Activated CD8-positive, alpha-beta T cell treated with anti-CD3 and anti-CD28 coated beads for 36 hours (primary cell): ENCODE measurements at regions of chr1 and their contacts with region 1.

Region 1: GRCh38 chr1:117534995-117535467 is 70.8 kb upstream of the TENT5C start:
- DNase-seq: peak; percentile 40
- ATAC-seq: peak; percentile 78
- H3K4me3 Mint-ChIP-seq: no peak overlapping the region
- H3K27ac Mint-ChIP-seq: no peak overlapping the region
- H3K4me1 Mint-ChIP-seq: peaks cover 25% of the 10 kb centered on the region
- H3K27me3 Mint-ChIP-seq: no peaks in the 10 kb centered on the region
- CTCF ChIP-seq: peak; percentile 65

Region 2: DNA sequence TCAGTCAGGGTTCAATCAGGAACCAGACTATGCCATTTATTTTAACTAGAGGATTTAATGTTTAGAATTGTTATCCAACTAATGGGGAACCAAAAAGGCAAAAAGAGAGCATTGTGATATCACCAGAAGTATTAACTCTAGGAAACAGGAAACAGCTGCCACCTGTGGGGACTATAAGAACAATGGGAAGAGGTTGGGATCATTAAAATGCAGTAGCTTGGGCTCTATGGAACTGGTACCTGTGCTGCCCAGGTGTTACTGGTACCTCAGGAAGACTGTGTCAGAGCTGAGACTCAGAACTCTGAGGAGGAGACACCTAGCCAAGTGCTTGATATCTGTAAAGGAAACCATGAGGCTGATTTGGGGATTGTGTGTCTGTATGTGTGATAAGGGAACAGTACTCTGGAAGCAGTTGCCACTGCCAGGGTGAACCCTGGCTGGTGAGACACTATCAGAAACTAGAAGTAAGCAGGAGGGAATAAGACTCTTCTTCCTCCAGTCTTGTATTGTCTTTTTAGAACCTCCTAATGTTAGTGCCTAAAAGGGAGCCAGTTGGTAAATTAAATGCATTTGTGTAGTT is 118.4 kb before region 1 on chr1:
- CTCF ChIA-PET with region 1: no interaction called
- POLR2A ChIA-PET with region 1: no interaction called
- intact Hi-C with region 1: no loop called
- DNase-seq: no peak
- ATAC-seq: no peak
- H3K4me3 Mint-ChIP-seq: no peak overlapping the region
- H3K27ac Mint-ChIP-seq: no peak overlapping the region
- H3K4me1 Mint-ChIP-seq: peaks cover 33% of the 10 kb centered on the region
- H3K27me3 Mint-ChIP-seq: no peaks in the 10 kb centered on the region
- CTCF ChIP-seq: no peak

Region 3: GRCh38 chr1:117501281-117501680 is 33.8 kb before region 1 on chr1:
- CTCF ChIA-PET with region 1: interaction called, 10 read pairs
- POLR2A ChIA-PET with region 1: no interaction called
- intact Hi-C with region 1: no loop called
- DNase-seq: no peak
- ATAC-seq: no peak
- H3K4me3 Mint-ChIP-seq: no peak overlapping the region
- H3K27ac Mint-ChIP-seq: no peak overlapping the region
- H3K4me1 Mint-ChIP-seq: no peaks in the 10 kb centered on the region
- H3K27me3 Mint-ChIP-seq: no peaks in the 10 kb centered on the region
- CTCF ChIP-seq: no peak

Region 4: GRCh38 chr1:117567435-117567834 is 32.4 kb after region 1 on chr1:
- CTCF ChIA-PET with region 1: interaction called, 12 read pairs
- POLR2A ChIA-PET with region 1: interaction called, 4 read pairs
- intact Hi-C with region 1: no loop called
- DNase-seq: no peak
- ATAC-seq: no peak
- H3K4me3 Mint-ChIP-seq: no peak overlapping the region
- H3K27ac Mint-ChIP-seq: no peak overlapping the region
- H3K4me1 Mint-ChIP-seq: peaks cover 7% of the 10 kb centered on the region
- H3K27me3 Mint-ChIP-seq: no peaks in the 10 kb centered on the region
- CTCF ChIP-seq: no peak

Region 5: GRCh38 chr1:117605774-117606648 is 71.0 kb after region 1 on chr1 and contains the start of gene TENT5C:
- CTCF ChIA-PET with region 1: interaction called, 30 read pairs
- POLR2A ChIA-PET with region 1: interaction called, 3 read pairs
- intact Hi-C with region 1: loop called (anchors 10 kb)
- DNase-seq: peak; percentile 98
- ATAC-seq: peak; percentile 96
- H3K4me3 Mint-ChIP-seq: peak within 1 kb of the TSS; percentile 84
- H3K27ac Mint-ChIP-seq: peak within 1 kb of the TSS; percentile 91
- H3K4me1 Mint-ChIP-seq: peaks cover 32% of the 10 kb centered on the region
- H3K27me3 Mint-ChIP-seq: peaks cover 13% of the 10 kb centered on the region
- CTCF ChIP-seq: no peak
- total RNA-seq, gene TENT5C: 13.1 to 13.6 TPM

Region 6: DNA sequence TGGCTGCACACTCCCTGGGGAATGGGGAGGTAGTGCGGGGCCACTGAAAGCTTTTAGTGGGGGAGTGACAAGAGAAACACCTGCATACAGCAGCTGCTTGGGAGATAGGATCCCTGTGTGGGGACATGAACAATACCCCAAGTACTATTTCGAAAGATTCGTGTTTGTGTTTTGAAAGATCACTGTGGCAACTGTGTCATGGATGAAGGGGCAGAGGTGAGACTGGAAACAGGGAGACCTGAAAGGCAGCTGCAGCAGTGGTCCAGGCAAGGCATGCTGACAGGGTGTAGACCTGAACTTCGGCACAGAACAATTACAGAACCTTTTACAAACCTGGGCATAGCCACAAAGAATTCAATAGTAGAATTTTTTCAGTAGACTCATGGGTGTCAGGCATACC is 103.7 kb after region 1 on chr1:
- CTCF ChIA-PET with region 1: interaction called, 10 read pairs
- POLR2A ChIA-PET with region 1: no interaction called
- intact Hi-C with region 1: no loop called
- DNase-seq: no peak
- ATAC-seq: no peak
- H3K4me3 Mint-ChIP-seq: no peak overlapping the region
- H3K27ac Mint-ChIP-seq: no peak overlapping the region
- H3K4me1 Mint-ChIP-seq: peaks cover 7% of the 10 kb centered on the region
- H3K27me3 Mint-ChIP-seq: peaks cover 35% of the 10 kb centered on the region
- CTCF ChIP-seq: no peak

Region 7: DNA sequence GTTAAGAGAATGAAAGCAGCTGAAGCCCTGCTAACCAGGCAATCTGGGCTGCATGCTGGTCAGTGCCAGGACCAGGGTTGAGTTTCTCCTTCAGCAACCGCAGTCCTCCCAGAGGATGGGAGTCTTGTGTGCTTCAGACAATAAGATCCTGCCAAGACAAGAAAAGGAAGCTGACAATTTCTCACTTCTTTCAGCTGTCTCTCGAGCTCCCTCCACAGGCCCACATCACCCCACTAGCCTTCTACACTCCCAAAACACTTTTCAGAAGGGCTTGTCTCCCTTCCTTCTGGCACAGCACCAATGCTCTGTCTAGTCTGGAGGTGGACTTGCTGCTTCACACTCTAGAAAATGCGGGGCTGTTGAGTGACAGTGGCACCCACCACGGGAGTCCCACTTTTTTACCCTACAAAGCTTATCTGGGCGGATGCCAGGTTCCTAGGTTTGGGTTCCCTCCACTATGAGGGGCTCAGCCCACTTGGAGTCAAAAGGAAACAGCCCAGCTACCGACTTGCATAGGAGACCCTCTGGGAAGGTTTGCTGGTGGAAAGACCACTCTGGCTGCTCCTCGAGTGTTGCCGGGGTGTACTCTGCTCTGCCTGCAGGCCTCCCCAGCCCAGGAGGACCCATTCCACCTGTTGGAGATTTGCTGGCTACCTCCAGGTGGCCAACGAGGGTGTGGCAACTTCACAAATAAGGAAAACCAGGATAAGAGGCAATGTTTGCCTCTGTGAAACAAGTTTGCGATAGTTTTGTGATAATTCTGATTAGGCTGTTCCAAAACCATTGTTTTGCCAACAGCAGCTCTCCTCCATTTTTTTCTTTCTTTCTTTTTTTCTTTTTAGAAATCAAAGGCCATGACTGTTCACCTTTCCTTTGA is 139.7 kb after region 1 on chr1:
- CTCF ChIA-PET with region 1: interaction called, 79 read pairs
- POLR2A ChIA-PET with region 1: interaction called, 3 read pairs
- intact Hi-C with region 1: loop called (anchors 5 kb)
- DNase-seq: peak; percentile 72
- ATAC-seq: peak; percentile 76
- H3K4me3 Mint-ChIP-seq: no peak overlapping the region
- H3K27ac Mint-ChIP-seq: no peak overlapping the region
- H3K4me1 Mint-ChIP-seq: peaks cover 12% of the 10 kb centered on the region
- H3K27me3 Mint-ChIP-seq: peaks cover 28% of the 10 kb centered on the region
- CTCF ChIP-seq: peak; percentile 46

Region 8: GRCh38 chr1:117758444-117759316 is 223.6 kb after region 1 on chr1:
- CTCF ChIA-PET with region 1: interaction called, 348 read pairs
- POLR2A ChIA-PET with region 1: interaction called, 3 read pairs
- intact Hi-C with region 1: loop called (anchors 2 kb)
- DNase-seq: peak; percentile 78
- ATAC-seq: peak; percentile 89
- H3K4me3 Mint-ChIP-seq: peak overlapping the region; percentile 62
- H3K27ac Mint-ChIP-seq: no peak overlapping the region
- H3K4me1 Mint-ChIP-seq: peaks cover 5% of the 10 kb centered on the region
- H3K27me3 Mint-ChIP-seq: peaks cover 12% of the 10 kb centered on the region
- CTCF ChIP-seq: peak; percentile 86